ENCODE measurements at regions of chr19 and their contacts with region 1.

Region 1: DNA sequence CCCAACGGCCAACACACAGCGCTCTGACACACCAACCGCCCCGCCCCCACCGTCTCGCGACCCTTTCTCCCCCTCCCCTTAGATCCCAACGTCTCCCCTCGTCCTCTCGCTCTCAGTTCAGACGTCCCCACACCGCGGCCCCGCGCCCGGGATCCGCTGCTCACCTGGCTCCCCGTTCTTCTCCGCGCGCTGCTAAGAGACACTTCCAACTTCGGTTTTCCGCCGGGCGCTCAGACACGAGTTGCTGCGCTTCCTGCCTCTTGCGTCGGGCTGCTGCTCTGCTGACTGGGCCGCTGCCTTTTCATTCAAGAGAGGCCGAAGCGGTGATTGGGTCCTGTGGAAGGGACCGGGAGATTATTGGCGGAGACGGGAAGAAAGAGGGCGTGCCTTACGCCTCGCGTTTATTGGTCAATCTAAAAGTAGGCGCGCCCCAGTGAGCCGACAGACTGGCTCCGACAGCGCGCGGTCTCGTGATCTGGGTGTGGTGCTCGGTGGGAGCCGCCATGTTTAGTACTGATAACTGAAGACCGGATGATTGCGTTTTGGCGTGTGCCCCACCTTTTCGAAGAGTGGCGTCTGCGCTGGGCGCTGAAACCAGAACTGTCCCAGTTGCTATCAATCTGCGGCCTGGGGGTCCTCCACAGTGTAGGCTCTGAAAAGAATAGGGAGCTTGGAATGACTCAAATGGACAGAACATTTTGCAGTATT is at the start of gene DDX39A:
- DNase-seq: peak; percentile 99
- ATAC-seq: peak; percentile 91
- H3K4me3 ChIP-seq: peak within 1 kb of the TSS; percentile 30 to 89 (median 82)
- H3K4me3 Mint-ChIP-seq: peak within 1 kb of the TSS; percentile 89
- H3K27ac ChIP-seq: peak within 1 kb of the TSS; percentile 92 to 98
- H3K27ac Mint-ChIP-seq: peak within 1 kb of the TSS; percentile 96
- H3K4me1 ChIP-seq: peaks cover 36 to 50% of the 10 kb centered on the region in 2 donors
- H3K4me1 Mint-ChIP-seq: peaks cover 37% of the 10 kb centered on the region
- H3K27me3 ChIP-seq: no peaks in the 10 kb centered on the region
- H3K27me3 Mint-ChIP-seq: no peaks in the 10 kb centered on the region
- CTCF ChIP-seq: no peak
- total RNA-seq, gene DDX39A: 168 and 178 TPM in 2 replicates

Region 2: DNA sequence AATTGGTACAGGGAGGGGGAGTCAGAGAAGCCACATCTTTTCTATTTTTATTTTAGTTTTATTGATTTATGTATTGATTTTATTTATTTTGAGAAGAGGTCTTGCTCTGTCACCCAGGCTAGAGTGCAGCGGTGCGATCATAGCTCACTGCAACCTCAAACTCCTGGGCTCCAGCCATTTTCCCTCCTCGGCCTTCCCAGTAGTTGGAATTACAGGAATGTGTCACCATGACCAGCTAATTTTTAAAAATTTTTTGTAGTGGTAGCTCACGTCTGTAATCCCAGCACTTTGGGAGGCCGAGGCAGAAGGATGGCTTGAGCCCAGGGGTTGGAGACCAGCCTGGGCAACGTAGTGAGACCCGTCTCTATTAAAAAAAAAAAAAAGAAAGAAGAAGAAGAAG is 383.6 kb before region 1 on chr19:
- CTCF ChIA-PET with region 1: no interaction called
- POLR2A ChIA-PET with region 1: no interaction called
- intact Hi-C with region 1: no loop called
- DNase-seq: no peak
- ATAC-seq: no peak
- H3K4me3 ChIP-seq: no peak overlapping the region
- H3K4me3 Mint-ChIP-seq: no peak overlapping the region
- H3K27ac ChIP-seq: no peak overlapping the region
- H3K27ac Mint-ChIP-seq: no peak overlapping the region
- H3K4me1 ChIP-seq: peaks cover 6 to 20% of the 10 kb centered on the region in 2 donors
- H3K4me1 Mint-ChIP-seq: peaks cover 23% of the 10 kb centered on the region
- H3K27me3 ChIP-seq: no peaks in the 10 kb centered on the region
- H3K27me3 Mint-ChIP-seq: no peaks in the 10 kb centered on the region
- CTCF ChIP-seq: no peak

Region 3: GRCh38 chr19:14366498-14366915 is 52.8 kb before region 1 on chr19:
- CTCF ChIA-PET with region 1: interaction called, 11 read pairs
- POLR2A ChIA-PET with region 1: interaction called, 5 read pairs
- intact Hi-C with region 1: loop called (anchors 2 kb)
- DNase-seq: peak; percentile 91
- ATAC-seq: peak; percentile 47
- H3K4me3 ChIP-seq: no peak overlapping the region
- H3K4me3 Mint-ChIP-seq: peak overlapping the region; percentile 40
- H3K27ac ChIP-seq: peak overlapping the region; percentile 63 to 100
- H3K27ac Mint-ChIP-seq: peak overlapping the region; percentile 87
- H3K4me1 ChIP-seq: peaks cover 67 to 80% of the 10 kb centered on the region in 2 donors
- H3K4me1 Mint-ChIP-seq: peaks cover 61% of the 10 kb centered on the region
- H3K27me3 ChIP-seq: no peaks in the 10 kb centered on the region
- H3K27me3 Mint-ChIP-seq: no peaks in the 10 kb centered on the region
- CTCF ChIP-seq: no peak

Region 4: GRCh38 chr19:14405758-14406644 is 13.3 kb before region 1 on chr19:
- CTCF ChIA-PET with region 1: interaction called, 24 read pairs
- POLR2A ChIA-PET with region 1: interaction called, 10 read pairs
- intact Hi-C with region 1: loop called (anchors 1 kb)
- DNase-seq: peak; percentile 93
- ATAC-seq: peak; percentile 89
- H3K4me3 ChIP-seq: peak overlapping the region in 3 of 5 experiments; percentile 11 to 36 (median 11)
- H3K4me3 Mint-ChIP-seq: peak overlapping the region; percentile 59
- H3K27ac ChIP-seq: peak overlapping the region in 1 of 2 donors; percentile 11
- H3K27ac Mint-ChIP-seq: peak overlapping the region; percentile 88
- H3K4me1 ChIP-seq: peaks cover 7 to 34% of the 10 kb centered on the region in 2 donors
- H3K4me1 Mint-ChIP-seq: peaks cover 41% of the 10 kb centered on the region
- H3K27me3 ChIP-seq: no peaks in the 10 kb centered on the region
- H3K27me3 Mint-ChIP-seq: no peaks in the 10 kb centered on the region
- CTCF ChIP-seq: peak; percentile 87

Region 5: DNA sequence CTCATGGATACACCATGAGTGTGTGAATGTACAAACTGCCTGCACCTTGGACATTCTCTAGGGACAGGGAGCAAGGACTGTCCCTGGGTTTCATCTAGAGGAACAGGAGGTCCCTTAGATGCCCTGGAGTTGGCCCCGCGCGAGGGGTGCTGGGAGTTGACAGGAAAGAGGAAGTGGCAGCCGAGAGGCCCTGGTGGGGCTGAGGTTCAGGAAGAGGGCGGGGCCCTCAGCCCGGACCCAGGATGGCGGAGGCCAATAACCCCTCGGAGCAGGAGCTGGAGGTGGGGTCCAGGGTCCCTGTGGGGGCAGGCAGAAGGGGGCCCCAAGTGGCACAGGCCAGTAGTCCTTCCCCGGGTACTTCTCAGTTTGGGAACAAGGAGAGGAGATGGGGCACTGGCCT is 20.8 kb after region 1 on chr19:
- CTCF ChIA-PET with region 1: interaction called, 4 read pairs
- POLR2A ChIA-PET with region 1: interaction called, 16 read pairs
- intact Hi-C with region 1: no loop called
- DNase-seq: peak; percentile 86
- ATAC-seq: peak; percentile 99
- H3K4me3 ChIP-seq: peak overlapping the region; percentile 48 to 95 (median 70)
- H3K4me3 Mint-ChIP-seq: peak overlapping the region; percentile 95
- H3K27ac ChIP-seq: peak overlapping the region; percentile 46 to 84
- H3K27ac Mint-ChIP-seq: peak overlapping the region; percentile 96
- H3K4me1 ChIP-seq: peaks cover 20 to 23% of the 10 kb centered on the region in 2 donors
- H3K4me1 Mint-ChIP-seq: peaks cover 33% of the 10 kb centered on the region
- H3K27me3 ChIP-seq: no peaks in the 10 kb centered on the region
- H3K27me3 Mint-ChIP-seq: no peaks in the 10 kb centered on the region
- CTCF ChIP-seq: no peak

Region 6: DNA sequence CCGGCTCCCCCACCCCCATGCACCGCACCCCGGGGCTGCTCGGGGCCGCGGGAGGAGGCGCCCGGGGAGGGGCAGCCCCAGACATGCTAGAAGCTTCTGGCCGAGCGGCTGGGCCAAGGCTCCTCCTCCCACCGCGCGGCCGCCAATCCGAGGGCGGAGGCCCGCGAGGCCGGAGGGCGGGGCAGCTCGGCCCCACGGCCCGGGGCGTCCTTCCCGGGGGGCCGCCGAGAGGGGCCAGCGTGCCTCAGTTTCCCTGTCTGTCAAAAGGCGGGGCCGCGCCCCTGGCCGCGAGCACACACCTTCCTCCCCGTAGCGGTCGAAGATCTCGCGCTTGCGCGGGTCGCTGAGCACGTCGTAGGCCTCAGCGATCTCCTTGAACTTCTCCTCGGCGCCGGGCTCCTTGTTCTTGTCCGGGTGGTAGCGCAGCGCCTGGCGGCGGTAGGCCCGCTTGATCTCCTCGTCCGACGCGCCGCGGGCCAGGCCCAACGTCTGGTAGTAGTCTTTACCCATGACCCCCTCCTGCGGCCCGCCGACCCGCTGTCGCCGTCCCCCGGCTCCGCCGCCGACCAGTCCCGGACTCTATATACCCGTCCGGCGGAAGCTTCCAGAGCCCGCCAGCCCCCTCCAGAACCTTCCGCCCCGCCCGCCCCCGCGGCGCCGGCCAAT is 98.7 kb after region 1 on chr19 and contains the start of gene DNAJB1:
- CTCF ChIA-PET with region 1: no interaction called
- POLR2A ChIA-PET with region 1: interaction called, 3 read pairs
- intact Hi-C with region 1: loop called (anchors 1 kb)
- DNase-seq: no peak
- ATAC-seq: peak; percentile 52
- H3K4me3 ChIP-seq: peak within 1 kb of the TSS; percentile 88 to 98 (median 94)
- H3K4me3 Mint-ChIP-seq: peak within 1 kb of the TSS; percentile 96
- H3K27ac ChIP-seq: peak within 1 kb of the TSS; percentile 93 to 95
- H3K27ac Mint-ChIP-seq: peak within 1 kb of the TSS; percentile 99
- H3K4me1 ChIP-seq: peaks cover 44 to 48% of the 10 kb centered on the region in 2 donors
- H3K4me1 Mint-ChIP-seq: peaks cover 55% of the 10 kb centered on the region
- H3K27me3 ChIP-seq: no peaks in the 10 kb centered on the region
- H3K27me3 Mint-ChIP-seq: no peaks in the 10 kb centered on the region
- CTCF ChIP-seq: no peak
- total RNA-seq, gene DNAJB1: 72.8 and 82.1 TPM in 2 replicates